WTC11 (cell line): ENCODE measurements at regions of chr7 and their contacts with region 1.

Region 1: GRCh38 chr7:78020136-78020873 is 221.7 kb downstream of the PHTF2 start:
- DNase-seq: peak; percentile 31
- ATAC-seq: peak; percentile 55
- H3K4me3 Mint-ChIP-seq: peak overlapping the region; percentile 66
- H3K27ac Mint-ChIP-seq: no peak overlapping the region
- H3K4me1 Mint-ChIP-seq: peaks cover 33% of the 10 kb centered on the region
- H3K27me3 Mint-ChIP-seq: peaks cover 15% of the 10 kb centered on the region
- CTCF ChIP-seq: peak; percentile 33; the same call in 1 of the 2 replicates

Region 2: DNA sequence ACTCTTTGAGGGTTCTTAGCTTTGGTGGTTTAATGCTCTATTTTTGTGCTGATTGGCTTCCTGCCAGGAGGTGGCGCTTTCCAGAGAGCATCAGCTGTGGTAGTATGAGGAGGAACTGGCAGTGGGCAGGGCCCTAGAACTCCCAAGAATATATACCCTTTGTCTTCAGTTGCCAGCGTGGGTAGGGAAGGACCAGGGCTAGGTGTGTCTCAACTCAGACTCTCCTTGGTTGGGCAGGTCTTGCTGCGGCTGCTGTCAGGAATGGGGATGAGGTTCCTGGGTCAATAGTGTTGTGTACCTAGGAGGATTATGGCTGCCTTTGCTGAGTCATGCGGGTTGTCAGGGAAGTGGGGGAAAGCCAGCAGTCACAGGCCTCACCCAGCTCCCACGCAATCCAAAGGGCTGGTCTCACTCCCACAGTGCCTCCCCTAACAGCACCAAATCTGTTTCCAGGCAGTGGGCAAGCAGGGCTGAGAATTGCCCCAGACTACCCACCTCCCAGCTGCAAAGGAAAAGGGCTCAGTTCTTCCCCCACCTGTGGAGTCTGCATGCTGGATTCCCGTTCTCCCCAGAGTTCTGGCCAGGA is 30.2 kb before region 1 on chr7:
- CTCF ChIA-PET with region 1: interaction called, 24 read pairs
- POLR2A ChIA-PET with region 1: interaction called, 4 read pairs
- DNase-seq: peak; percentile 68
- ATAC-seq: peak; percentile 61
- H3K4me3 Mint-ChIP-seq: no peak overlapping the region
- H3K27ac Mint-ChIP-seq: no peak overlapping the region
- H3K4me1 Mint-ChIP-seq: peaks cover 21% of the 10 kb centered on the region
- H3K27me3 Mint-ChIP-seq: no peaks in the 10 kb centered on the region; the same call in 1 of the 2 replicates
- CTCF ChIP-seq: peak; percentile 46; the same call in 1 of the 2 replicates

Region 3: GRCh38 chr7:78039790-78040776 is 19.8 kb after region 1 on chr7:
- CTCF ChIA-PET with region 1: interaction called, 111 read pairs
- POLR2A ChIA-PET with region 1: no interaction called
- DNase-seq: peak; percentile 81
- ATAC-seq: peak; percentile 90
- H3K4me3 Mint-ChIP-seq: peak overlapping the region; percentile 40
- H3K27ac Mint-ChIP-seq: no peak overlapping the region
- H3K4me1 Mint-ChIP-seq: peaks cover 30% of the 10 kb centered on the region
- H3K27me3 Mint-ChIP-seq: no peaks in the 10 kb centered on the region; the same call in 1 of the 2 replicates
- CTCF ChIP-seq: peak; percentile 99

Region 4: GRCh38 chr7:78073609-78074382 is 53.5 kb after region 1 on chr7:
- CTCF ChIA-PET with region 1: interaction called, 35 read pairs
- POLR2A ChIA-PET with region 1: no interaction called
- DNase-seq: no peak
- ATAC-seq: peak; percentile 68
- H3K4me3 Mint-ChIP-seq: peak overlapping the region; percentile 21; the same call in 1 of the 2 replicates
- H3K27ac Mint-ChIP-seq: no peak overlapping the region; the same call in 1 of the 2 replicates
- H3K4me1 Mint-ChIP-seq: peaks cover 20% of the 10 kb centered on the region
- H3K27me3 Mint-ChIP-seq: peaks cover 24% of the 10 kb centered on the region
- CTCF ChIP-seq: no peak

Region 5: GRCh38 chr7:78090616-78091015 is 70.3 kb after region 1 on chr7:
- CTCF ChIA-PET with region 1: interaction called, 12 read pairs
- POLR2A ChIA-PET with region 1: no interaction called
- DNase-seq: no peak
- ATAC-seq: peak; percentile 47; the same call in 1 of the 2 replicates
- H3K4me3 Mint-ChIP-seq: no peak overlapping the region
- H3K27ac Mint-ChIP-seq: no peak overlapping the region
- H3K4me1 Mint-ChIP-seq: no peaks in the 10 kb centered on the region
- H3K27me3 Mint-ChIP-seq: no peaks in the 10 kb centered on the region
- CTCF ChIP-seq: no peak

Region 6: DNA sequence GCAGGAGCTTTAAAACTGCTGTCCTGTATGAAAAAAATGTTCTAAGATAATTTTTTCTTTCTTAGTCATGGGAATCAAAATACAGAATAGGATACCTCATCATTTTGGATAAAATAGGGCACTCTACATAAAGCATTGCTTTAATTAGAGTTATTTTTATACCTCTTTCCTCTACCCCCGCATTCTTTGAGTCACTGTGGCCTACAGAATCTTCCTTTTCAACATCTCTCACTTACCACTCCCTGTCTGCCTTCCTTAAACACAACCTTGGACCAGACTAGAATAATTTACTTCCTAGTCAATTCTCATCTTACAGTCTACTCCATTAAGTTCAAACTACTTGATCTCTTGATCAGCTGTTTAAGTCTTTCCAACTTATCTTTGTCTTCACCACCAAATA is 240.5 kb after region 1 on chr7:
- CTCF ChIA-PET with region 1: no interaction called
- POLR2A ChIA-PET with region 1: no interaction called
- DNase-seq: no peak
- ATAC-seq: no peak
- H3K4me3 Mint-ChIP-seq: no peak overlapping the region
- H3K27ac Mint-ChIP-seq: no peak overlapping the region
- H3K4me1 Mint-ChIP-seq: peaks cover 25% of the 10 kb centered on the region
- H3K27me3 Mint-ChIP-seq: no peaks in the 10 kb centered on the region
- CTCF ChIP-seq: no peak